A549 (cell line): ENCODE measurements at regions of chr20 and their contacts with region 1.

Region 1: DNA sequence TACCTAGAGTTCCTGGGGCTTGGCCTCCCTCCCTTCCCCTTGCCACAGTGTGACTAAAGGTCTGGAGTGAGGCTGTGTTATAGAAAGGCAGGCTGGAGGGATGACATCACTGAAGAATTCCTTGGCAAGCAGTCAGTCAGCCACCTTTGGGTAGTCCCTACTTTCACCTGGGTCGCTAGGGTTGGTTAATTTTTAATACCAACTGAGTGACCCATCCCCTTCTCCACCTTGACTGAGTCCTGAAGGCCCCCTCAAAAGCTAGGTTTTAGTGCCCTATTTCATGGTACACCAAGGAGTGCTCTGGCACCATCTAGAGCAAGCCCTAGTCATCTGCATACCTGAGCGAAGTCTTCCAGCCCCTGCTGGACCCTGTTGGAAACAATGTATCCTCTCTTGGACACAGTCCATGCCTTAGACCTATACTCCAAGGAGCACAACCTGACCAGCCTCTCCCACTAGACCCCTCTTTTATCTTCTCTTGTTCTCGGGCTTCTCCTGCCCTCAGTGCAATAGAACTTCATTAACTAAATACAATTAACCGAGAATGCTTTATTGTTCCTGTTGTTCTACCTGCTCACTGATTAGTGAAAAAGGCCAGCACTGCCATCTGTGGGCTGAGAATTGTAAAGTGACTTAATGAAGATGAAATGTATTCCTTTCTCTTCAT is 44.6 kb downstream of the RIN2 start:
- DNase-seq: peak; percentile 47 to 76
- ATAC-seq: peak; percentile 96 to 98
- H3K4me3 ChIP-seq: no peak overlapping the region
- H3K27ac ChIP-seq: peak overlapping the region; percentile 2 to 67; a peak in 5 of 6 replicates
- H3K4me1 ChIP-seq: peaks cover 28% of the 10 kb centered on the region
- CTCF ChIP-seq: peak; percentile 44
- EP300 ChIP-seq: no peak
- POLR2A ChIP-seq: no peak
- RAD21 ChIP-seq: peak; percentile 45 to 52

Region 2: GRCh38 chr20:19815553-19815991 is 12.9 kb after region 1 on chr20:
- CTCF ChIA-PET with region 1: interaction called, 24 read pairs
- POLR2A ChIA-PET with region 1: interaction called, 4 read pairs
- DNase-seq: peak; percentile 95 to 96
- ATAC-seq: peak; percentile 99 to 100
- H3K4me3 ChIP-seq: no peak overlapping the region
- H3K27ac ChIP-seq: peak overlapping the region; percentile 80 to 89
- H3K4me1 ChIP-seq: peaks cover 40% of the 10 kb centered on the region
- CTCF ChIP-seq: peak; percentile 14; the same call in 2 of the 3 replicates
- EP300 ChIP-seq: peak; percentile 75 to 89; a peak in 3 of 5 replicates
- POLR2A ChIP-seq: no peak
- RAD21 ChIP-seq: peak; percentile 57 to 75